GM13976 (cell line): ENCODE measurements at regions of chr10 and their contacts with region 1.

Region 1: DNA sequence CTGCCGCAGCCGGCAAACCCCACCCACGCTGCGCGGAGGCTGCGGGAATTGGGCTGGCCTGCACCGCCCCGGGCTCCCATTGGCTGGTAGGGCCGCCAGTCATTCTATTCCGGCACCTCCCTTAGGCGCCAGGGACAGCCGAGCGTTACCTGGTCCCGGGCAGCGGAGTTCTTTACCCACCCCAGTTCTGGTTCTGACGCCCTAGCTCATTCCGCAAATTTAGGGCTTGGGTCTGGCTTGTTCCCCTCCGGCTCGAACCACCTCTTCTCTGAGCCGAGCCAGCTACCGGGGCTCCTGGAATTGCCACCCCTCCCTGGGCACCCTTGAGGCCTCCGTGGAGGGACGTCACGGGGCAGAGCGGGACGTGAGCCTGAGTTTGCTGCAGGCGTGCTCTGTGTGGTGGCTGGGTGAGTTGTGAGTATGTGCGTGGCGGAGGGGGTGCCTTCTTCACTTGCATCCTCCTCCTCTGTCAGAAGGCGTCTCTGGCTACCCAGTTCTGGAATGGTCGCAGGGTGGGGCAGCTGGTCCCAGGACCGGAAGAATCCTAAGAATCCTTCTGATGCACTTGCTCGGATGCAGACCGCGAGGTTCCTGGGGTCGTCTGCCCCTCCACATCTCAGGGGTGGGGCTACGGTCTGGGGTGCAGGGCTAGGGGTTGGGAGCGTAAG is at the starts of genes PDZD7 and SFXN3:
- DNase-seq: peak; percentile 98
- CTCF ChIP-seq: no peak

Region 2: GRCh38 chr10:101141616-101142532 is 110.6 kb after region 1 on chr10:
- in situ Hi-C with region 1: loop called (anchors 10 kb)
- DNase-seq: peak; percentile 92
- CTCF ChIP-seq: peak; percentile 97